AG04450 (cell line): ENCODE measurements at regions of chr4 and their contacts with region 1.

Region 1: DNA sequence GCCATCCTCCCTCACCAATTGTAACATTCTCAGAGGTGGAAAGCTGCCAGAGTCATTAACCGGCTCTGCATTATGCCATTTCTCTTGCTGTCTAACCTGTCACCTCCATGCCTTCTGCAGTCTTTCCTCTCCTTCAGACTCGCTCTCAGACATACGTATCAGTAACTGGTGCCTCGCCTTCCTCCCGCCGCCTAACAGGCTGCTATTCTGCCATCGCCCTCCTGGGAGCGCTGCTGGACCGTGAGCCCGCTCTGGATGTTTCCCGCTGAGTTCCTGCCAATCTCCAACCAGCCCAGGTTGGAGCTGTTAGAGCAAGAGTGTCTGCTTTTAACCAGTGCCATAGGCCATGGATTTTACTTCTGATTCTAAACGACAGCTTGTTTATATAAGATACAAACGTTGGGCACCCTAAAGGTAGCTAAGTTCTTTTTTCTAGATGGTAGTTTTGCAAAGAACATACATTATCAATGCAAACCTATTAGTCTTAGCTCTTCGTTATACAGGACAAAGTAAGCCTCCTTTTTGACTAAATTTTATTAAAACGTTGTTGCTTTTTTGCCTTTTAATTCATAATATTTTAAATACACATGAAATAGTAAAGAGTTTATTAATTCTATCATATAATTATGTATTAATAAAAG is 59.5 kb upstream of the NEIL3 start:
- DNase-seq: peak; percentile 47
- H3K4me3 ChIP-seq: no peak overlapping the region
- H3K27ac ChIP-seq: no peak overlapping the region
- H3K27me3 ChIP-seq: no peaks in the 10 kb centered on the region
- CTCF ChIP-seq: peak; percentile 100

Region 2: DNA sequence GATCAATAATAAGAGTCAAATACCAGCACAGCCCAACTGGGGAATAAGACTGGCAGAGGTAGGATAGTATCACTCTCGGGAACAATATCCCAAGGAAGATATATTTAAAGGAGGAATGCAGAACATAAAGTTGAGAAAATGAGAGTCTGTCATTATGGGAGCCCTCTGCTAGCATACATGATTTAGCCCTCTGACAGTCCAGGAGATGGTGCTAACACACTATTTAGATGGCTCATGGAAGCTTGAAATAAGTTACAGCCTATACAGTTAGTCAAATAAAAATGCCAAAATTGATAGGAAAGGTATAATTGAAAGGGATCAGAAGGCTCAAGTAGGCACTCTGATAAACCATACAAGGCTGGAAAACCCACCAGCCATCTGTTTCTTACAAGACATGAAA is 141.5 kb before region 1 on chr4:
- CTCF ChIA-PET with region 1: interaction called, 14 read pairs
- POLR2A ChIA-PET with region 1: no interaction called
- DNase-seq: peak; percentile 21
- H3K4me3 ChIP-seq: no peak overlapping the region
- H3K27ac ChIP-seq: no peak overlapping the region
- H3K27me3 ChIP-seq: no peaks in the 10 kb centered on the region
- CTCF ChIP-seq: peak; percentile 71

Region 3: DNA sequence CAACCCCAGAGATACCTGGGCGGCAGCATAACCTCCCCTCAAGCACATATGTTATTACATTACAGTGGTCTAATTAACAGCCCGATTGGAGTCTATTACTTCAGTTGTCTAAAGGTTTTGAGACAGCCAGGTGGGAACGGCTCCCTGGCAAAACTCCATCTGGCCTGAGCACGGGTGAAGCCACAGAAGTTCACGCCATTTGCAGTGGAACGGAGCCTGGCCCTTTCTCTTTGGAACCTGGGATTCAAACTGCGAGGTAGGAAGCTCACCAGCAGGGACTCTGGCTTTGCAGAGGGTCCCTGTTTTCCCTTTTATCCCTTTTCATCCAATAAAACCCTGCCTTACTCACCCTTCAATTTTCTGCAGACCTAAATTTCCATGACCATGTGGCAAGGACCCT is 13.6 kb after region 1 on chr4:
- CTCF ChIA-PET with region 1: interaction called, 10 read pairs
- POLR2A ChIA-PET with region 1: no interaction called
- DNase-seq: no peak
- H3K4me3 ChIP-seq: no peak overlapping the region
- H3K27ac ChIP-seq: no peak overlapping the region
- H3K27me3 ChIP-seq: no peaks in the 10 kb centered on the region
- CTCF ChIP-seq: no peak

Region 4: GRCh38 chr4:177293208-177294033 is 43.2 kb after region 1 on chr4:
- CTCF ChIA-PET with region 1: interaction called, 10 read pairs
- POLR2A ChIA-PET with region 1: no interaction called
- DNase-seq: no peak
- H3K4me3 ChIP-seq: no peak overlapping the region
- H3K27ac ChIP-seq: no peak overlapping the region
- H3K27me3 ChIP-seq: no peaks in the 10 kb centered on the region
- CTCF ChIP-seq: no peak

Region 5: DNA sequence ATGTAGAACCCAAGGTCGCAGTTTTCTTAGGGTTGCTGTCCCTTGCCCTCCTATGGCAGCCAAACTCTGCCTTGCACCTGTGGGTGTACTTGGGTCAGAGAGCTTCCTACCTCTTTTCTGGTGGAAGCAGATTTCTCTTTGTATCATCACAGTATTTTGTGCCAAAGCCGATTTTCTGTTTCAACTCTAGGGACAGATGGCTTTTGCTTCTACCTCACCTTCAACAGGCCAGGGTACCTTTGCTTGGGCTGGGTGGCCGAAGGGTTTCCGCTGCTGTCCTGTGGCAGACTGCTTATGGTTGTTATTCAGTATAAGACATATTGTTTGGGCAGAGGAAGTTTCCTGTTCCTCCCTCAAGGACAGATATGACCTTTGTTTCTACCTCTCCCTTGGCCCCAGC is 81.9 kb after region 1 on chr4:
- CTCF ChIA-PET with region 1: interaction called, 93 read pairs
- POLR2A ChIA-PET with region 1: no interaction called
- DNase-seq: no peak
- H3K4me3 ChIP-seq: no peak overlapping the region
- H3K27ac ChIP-seq: no peak overlapping the region
- H3K27me3 ChIP-seq: no peaks in the 10 kb centered on the region
- CTCF ChIP-seq: no peak

Region 6: DNA sequence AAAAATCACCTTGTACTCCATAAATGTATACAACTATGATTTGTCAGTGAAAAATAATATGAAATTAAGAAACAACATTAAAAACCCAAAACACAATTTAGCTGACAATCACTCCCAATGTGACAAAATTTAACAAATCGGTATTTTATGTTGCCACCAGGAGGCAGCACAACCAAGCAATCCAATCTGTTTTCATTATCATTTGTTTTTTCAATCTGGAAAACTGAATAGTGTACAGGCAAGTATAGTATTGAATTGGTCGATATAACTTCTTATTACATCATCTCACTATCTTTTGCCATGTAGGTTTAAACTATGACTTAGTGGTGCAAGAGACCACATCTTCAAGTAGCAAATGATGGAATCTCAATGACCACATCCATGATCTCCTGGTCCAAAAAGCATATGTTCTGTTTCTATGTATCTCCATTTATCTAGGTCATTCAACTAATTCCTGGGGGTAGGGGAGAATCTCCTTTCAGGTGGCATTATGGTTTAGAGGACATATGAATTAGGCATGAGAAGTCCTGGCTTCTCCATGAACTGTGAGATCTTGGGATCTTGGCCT is 304.9 kb after region 1 on chr4:
- CTCF ChIA-PET with region 1: interaction called, 10 read pairs
- POLR2A ChIA-PET with region 1: no interaction called
- DNase-seq: no peak
- H3K4me3 ChIP-seq: no peak overlapping the region
- H3K27ac ChIP-seq: no peak overlapping the region
- H3K27me3 ChIP-seq: no peaks in the 10 kb centered on the region
- CTCF ChIP-seq: peak; percentile 72

Region 7: GRCh38 chr4:177596035-177596434 is 345.9 kb after region 1 on chr4:
- CTCF ChIA-PET with region 1: no interaction called
- POLR2A ChIA-PET with region 1: no interaction called
- DNase-seq: peak; percentile 29
- H3K4me3 ChIP-seq: no peak overlapping the region
- H3K27ac ChIP-seq: no peak overlapping the region
- H3K27me3 ChIP-seq: no peaks in the 10 kb centered on the region
- CTCF ChIP-seq: no peak